Mammary epithelial cell (primary cell): ENCODE measurements at regions of chr20 and their contacts with region 1.

Region 1: DNA sequence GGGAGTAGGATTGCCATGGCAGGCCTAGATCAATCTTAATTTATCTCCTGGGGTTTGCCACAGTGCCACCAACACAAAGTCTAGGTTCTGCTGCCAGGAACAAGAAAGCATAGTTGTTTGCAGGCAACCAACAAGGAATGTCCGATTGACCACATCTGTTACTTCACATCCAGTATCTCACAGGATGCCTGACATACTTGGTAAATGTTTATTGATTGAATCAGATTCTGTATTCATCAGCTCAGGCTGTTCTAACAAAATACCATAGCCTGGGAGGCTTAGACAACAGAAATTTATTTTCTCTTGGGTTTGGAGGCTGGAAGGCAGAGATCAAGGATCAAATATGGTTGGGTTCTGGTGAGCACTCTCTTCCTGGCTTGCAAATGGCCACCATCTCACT is 26.3 kb upstream of the MC3R start:
- DNase-seq: peak; percentile 68
- H3K4me3 ChIP-seq: peak overlapping the region in 1 of 3 experiments; percentile 5
- H3K27ac ChIP-seq: peak overlapping the region; percentile 93
- H3K4me1 ChIP-seq: peaks cover 44% of the 10 kb centered on the region
- H3K27me3 ChIP-seq: no peaks in the 10 kb centered on the region
- CTCF ChIP-seq: no peak

Region 2: DNA sequence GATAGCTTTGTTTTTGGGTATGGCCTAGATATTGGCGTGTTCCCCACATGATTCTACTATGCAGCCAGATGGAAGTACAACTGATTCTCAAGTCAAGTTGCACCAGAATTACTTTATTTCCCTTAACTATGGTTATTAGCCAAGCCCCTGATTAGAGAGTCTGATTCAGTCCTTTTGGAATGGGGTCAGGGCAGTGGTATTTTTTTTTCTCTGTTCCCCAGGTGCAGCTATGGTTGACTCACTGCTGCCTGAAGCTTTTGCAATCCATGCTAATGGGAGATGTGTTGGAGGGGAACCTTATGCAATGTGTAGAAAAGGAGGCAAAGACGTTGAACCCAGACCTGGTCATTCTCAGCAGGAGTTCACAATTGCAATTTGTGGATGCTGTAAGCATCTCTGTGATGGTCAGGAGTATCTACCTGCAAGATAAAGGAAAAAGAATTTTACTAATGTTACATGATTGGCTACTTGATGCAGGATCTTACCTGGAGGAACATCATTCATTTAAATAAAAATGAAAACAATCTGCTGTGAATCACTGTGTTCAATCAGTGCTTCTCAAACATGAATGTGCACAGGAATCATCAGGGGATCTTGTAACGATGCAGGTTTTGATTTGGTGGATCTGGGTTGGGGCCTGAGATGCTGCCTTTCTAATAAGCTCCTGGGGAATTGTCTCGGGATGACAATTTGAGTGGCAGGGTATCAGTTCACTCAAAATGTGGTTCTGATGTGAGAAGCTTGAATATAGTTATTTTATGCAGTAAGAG is 1964.9 kb before region 1 on chr20:
- CTCF ChIA-PET with region 1: no interaction called
- dilution Hi-C with region 1: no loop called
- in situ Hi-C with region 1: no loop called
- intact Hi-C with region 1: loop called (anchors 10 kb)
- DNase-seq: peak; percentile 92
- H3K4me3 ChIP-seq: no peak overlapping the region
- H3K27ac ChIP-seq: peak overlapping the region; percentile 44
- H3K4me1 ChIP-seq: peaks cover 29% of the 10 kb centered on the region
- H3K27me3 ChIP-seq: no peaks in the 10 kb centered on the region
- CTCF ChIP-seq: no peak

Region 3: DNA sequence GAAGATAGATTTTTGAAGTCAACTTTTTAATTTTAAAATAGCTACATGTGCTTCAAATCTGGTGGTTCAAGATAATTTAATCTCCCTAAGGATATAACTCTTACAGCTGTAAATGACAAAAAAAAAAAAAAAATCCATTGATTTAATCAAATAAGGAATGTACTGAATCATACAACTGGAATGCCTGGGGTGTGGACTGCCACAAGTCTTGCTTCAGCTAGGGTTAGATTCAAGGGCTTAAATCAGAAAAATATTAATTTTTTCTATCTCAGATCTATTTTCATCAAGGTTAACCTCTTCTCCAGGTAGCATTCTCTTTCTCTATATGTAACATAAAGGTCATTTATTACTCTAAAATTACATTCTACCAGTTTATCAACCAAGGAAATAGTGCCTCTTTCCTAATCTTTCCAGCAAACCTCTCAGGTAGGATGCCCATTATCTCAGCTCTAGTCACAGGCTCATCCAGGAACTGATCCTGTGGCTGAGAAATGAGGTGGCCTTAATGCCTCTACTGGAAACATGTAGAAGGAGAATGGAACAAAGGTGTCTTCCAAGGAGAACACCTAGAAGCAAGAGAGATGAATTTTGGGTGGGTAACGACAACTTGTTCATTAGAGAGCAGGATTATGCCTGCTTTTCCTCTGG is 683.8 kb before region 1 on chr20:
- CTCF ChIA-PET with region 1: no interaction called
- dilution Hi-C with region 1: no loop called
- in situ Hi-C with region 1: no loop called
- intact Hi-C with region 1: loop called (anchors 5 kb)
- DNase-seq: peak; percentile 46
- H3K4me3 ChIP-seq: peak overlapping the region in 1 of 3 experiments; percentile 3
- H3K27ac ChIP-seq: peak overlapping the region; percentile 78
- H3K4me1 ChIP-seq: peaks cover 37% of the 10 kb centered on the region
- H3K27me3 ChIP-seq: no peaks in the 10 kb centered on the region
- CTCF ChIP-seq: no peak

Region 4: GRCh38 chr20:56094228-56094627 is 128.0 kb before region 1 on chr20:
- CTCF ChIA-PET with region 1: no interaction called
- dilution Hi-C with region 1: no loop called
- in situ Hi-C with region 1: no loop called
- intact Hi-C with region 1: no loop called
- DNase-seq: no peak
- H3K4me3 ChIP-seq: no peak overlapping the region
- H3K27ac ChIP-seq: no peak overlapping the region
- H3K4me1 ChIP-seq: no peaks in the 10 kb centered on the region
- H3K27me3 ChIP-seq: no peaks in the 10 kb centered on the region
- CTCF ChIP-seq: no peak

Region 5: DNA sequence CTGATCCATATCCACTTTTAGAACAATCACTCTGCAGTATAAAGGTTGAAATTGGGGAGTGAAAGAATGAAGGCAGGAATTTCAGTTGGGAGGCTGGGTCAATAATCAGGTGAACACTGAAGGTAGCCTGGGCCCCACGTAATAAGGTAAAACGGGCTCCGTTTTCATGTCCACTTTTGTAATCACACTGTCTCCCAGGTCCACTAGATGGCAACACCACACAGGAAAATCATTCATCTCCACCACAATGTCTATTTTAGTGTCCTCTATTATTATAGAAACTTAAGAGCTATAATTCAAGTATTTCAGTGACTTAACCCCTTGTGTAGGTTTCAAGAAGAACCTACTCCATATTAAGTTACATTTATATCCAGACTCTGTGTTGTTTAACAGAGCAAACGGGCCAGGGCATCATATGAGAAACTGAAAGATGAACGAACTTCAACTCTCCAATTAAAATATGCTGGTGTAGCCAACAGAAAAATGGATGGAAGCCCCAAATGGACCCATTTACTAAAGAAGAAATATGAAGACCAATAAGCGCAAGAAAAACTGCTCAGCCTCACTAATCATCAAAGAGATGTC is 19.6 kb before region 1 on chr20:
- CTCF ChIA-PET with region 1: no interaction called
- dilution Hi-C with region 1: no loop called
- in situ Hi-C with region 1: no loop called
- intact Hi-C with region 1: loop called (anchors 1 kb)
- DNase-seq: peak; percentile 23
- H3K4me3 ChIP-seq: no peak overlapping the region
- H3K27ac ChIP-seq: no peak overlapping the region
- H3K4me1 ChIP-seq: peaks cover 5% of the 10 kb centered on the region
- H3K27me3 ChIP-seq: no peaks in the 10 kb centered on the region
- CTCF ChIP-seq: peak; percentile 76 to 81

Region 6: GRCh38 chr20:56247948-56248782 is 26.0 kb after region 1 on chr20 and contains the start of gene MC3R:
- CTCF ChIA-PET with region 1: no interaction called
- dilution Hi-C with region 1: no loop called
- in situ Hi-C with region 1: no loop called
- intact Hi-C with region 1: loop called (anchors 2 kb)
- DNase-seq: peak; percentile 39
- H3K4me3 ChIP-seq: no peak within 1 kb of the TSS
- H3K27ac ChIP-seq: no peak within 1 kb of the TSS
- H3K4me1 ChIP-seq: peaks cover 8% of the 10 kb centered on the region
- H3K27me3 ChIP-seq: peaks cover 16% of the 10 kb centered on the region
- CTCF ChIP-seq: peak; percentile 91 to 96
- total RNA-seq, gene MC3R: not detected